Astrocyte of the cerebellum (primary cell): ENCODE measurements at regions of chr19 and their contacts with region 1.

Region 1: GRCh38 chr19:13887517-13887916 is 10.6 kb downstream of the NANOS3 start:
- DNase-seq: no peak
- H3K4me3 ChIP-seq: no peak overlapping the region
- CTCF ChIP-seq: no peak

Region 2: GRCh38 chr19:14078411-14078810 is 190.9 kb after region 1 on chr19:
- in situ Hi-C with region 1: loop called (anchors 5 kb)
- DNase-seq: no peak
- H3K4me3 ChIP-seq: no peak overlapping the region
- CTCF ChIP-seq: no peak